HepG2 (cell line): ENCODE measurements at regions of chr11 and their contacts with region 1.

Region 1: GRCh38 chr11:128707681-128708080 is 13.8 kb downstream of the FLI1 start:
- DNase-seq: no peak
- ATAC-seq: no peak
- H3K4me3 ChIP-seq: no peak overlapping the region
- H3K27ac ChIP-seq: no peak overlapping the region
- H3K4me1 ChIP-seq: no peaks in the 10 kb centered on the region
- H3K27me3 ChIP-seq: peaks cover 0 to 12% of the 10 kb centered on the region in 2 experiments; a peak in 1 of 5 replicates
- CTCF ChIP-seq: no peak
- EP300 ChIP-seq: no peak
- POLR2A ChIP-seq: no peak
- RAD21 ChIP-seq: no peak

Region 2: DNA sequence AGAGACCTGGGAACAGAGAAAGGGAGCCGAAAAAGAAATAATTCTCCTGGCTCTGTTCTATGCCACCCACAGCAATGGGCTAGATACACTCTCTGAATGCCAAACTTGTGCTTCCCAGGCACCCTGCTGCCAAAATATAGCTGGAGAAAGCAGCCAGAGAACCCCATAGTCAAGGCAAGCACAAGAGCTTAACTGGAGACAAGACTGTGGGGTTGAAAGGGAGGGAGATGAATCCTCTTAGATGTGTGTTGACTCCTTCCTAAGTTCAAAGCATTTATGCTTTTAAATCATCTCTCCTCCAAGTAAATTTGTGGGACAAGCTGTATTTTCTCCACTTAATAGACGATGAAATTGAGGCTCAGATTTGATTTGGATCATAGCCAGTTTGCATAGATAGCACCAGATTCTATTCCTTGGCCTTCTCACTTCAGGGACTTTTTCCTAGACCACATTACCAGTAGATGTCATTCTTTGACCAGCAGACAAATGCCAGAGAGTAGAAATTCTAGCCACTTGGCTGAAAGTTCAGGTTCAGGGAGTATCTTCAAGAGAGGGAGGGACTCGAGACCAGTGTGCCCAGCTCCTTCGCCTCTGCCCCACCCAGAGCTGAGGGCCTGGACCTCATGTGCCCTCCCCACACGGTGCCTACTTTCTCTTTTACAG is 103.8 kb before region 1 on chr11:
- CTCF ChIA-PET with region 1: no interaction called
- POLR2A ChIA-PET with region 1: no interaction called
- in situ Hi-C with region 1: no loop called
- intact Hi-C with region 1: no loop called
- DNase-seq: no peak
- ATAC-seq: no peak
- H3K4me3 ChIP-seq: no peak overlapping the region
- H3K27ac ChIP-seq: no peak overlapping the region
- H3K4me1 ChIP-seq: no peaks in the 10 kb centered on the region
- H3K27me3 ChIP-seq: peaks cover 0 to 6% of the 10 kb centered on the region in 2 experiments; a peak in 2 of 5 replicates
- CTCF ChIP-seq: no peak
- EP300 ChIP-seq: no peak
- POLR2A ChIP-seq: no peak
- RAD21 ChIP-seq: no peak

Region 3: DNA sequence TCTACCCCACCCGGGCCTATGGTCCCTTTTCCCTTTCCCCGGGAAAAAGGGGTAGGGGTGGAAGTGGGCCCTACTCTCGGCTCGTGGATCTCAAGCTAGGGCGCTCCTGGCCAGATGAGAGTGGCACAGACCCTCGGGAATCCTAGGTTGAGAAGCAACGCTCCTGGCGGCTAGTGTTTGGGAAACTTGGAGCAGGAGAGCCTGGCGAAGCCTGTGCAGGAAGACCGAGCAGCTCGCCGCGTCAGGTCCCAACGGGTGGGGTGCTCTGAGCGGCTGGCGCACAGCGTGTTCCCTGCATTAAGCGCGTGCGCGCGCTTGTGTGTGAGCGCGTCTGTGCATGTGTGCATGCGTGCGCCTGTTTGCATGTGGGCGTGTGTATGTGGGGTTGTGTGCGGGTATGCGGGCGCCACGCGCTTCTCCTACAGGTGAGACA is 20.9 kb before region 1 on chr11:
- CTCF ChIA-PET with region 1: no interaction called
- POLR2A ChIA-PET with region 1: no interaction called
- in situ Hi-C with region 1: no loop called
- intact Hi-C with region 1: loop called (anchors 1 kb)
- DNase-seq: no peak
- ATAC-seq: no peak
- H3K4me3 ChIP-seq: no peak overlapping the region
- H3K27ac ChIP-seq: no peak overlapping the region
- H3K4me1 ChIP-seq: no peaks in the 10 kb centered on the region
- H3K27me3 ChIP-seq: peaks cover 11 to 72% of the 10 kb centered on the region in 2 experiments
- CTCF ChIP-seq: no peak
- EP300 ChIP-seq: no peak
- POLR2A ChIP-seq: no peak
- RAD21 ChIP-seq: no peak